Heart left ventricle (tissue), 16 donors: ENCODE measurements at regions of chr1 and their contacts with region 1.

Region 1: GRCh38 chr1:71093938-71094337 is 13.1 kb upstream of the ZRANB2 start:
- DNase-seq: no peak
- ATAC-seq: no peak
- H3K4me3 ChIP-seq: no peak overlapping the region
- H3K27ac ChIP-seq: no peak overlapping the region
- H3K4me1 ChIP-seq: no peaks in the 10 kb centered on the region
- H3K27me3 ChIP-seq: no peaks in the 10 kb centered on the region
- CTCF ChIP-seq: peak in 8 of 12 donors; percentile 16 to 47 (median 38)
- POLR2A ChIP-seq: no peak

Region 2: DNA sequence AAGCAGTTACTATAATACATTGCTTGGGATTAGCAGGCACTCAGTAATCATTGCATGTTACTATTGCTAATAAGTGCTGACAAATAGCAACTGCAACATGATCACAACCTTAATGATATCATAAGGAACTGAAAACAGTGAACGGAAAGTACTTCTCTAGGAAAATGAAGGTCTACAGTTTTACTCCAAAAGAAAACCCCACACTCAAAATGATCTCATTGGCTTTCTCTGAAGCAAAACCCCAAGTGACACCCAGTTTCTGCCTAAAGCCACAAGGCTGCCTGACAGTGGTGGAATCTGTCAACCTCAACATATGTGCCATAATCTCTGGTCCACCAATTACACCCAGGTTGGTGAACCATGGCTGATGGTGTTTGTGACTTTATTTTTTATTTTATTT is 183.9 kb before region 1 on chr1:
- intact Hi-C with region 1: no loop called
- DNase-seq: no peak
- ATAC-seq: no peak
- H3K4me3 ChIP-seq: no peak overlapping the region
- H3K27ac ChIP-seq: no peak overlapping the region
- H3K4me1 ChIP-seq: peaks cover 0 to 3% (median 0%) of the 10 kb centered on the region in 12 donors
- H3K27me3 ChIP-seq: no peaks in the 10 kb centered on the region
- CTCF ChIP-seq: no peak
- POLR2A ChIP-seq: no peak

Region 3: GRCh38 chr1:71521655-71522264 is 427.8 kb after region 1 on chr1:
- intact Hi-C with region 1: loop called in 3 of 10 experiments (anchors 10 kb)
- DNase-seq: peak in 3 of 5 donors; percentile 11 to 40 (median 20)
- ATAC-seq: peak in 2 of 4 donors; percentile 52 to 67
- H3K4me3 ChIP-seq: no peak overlapping the region
- H3K27ac ChIP-seq: no peak overlapping the region
- H3K4me1 ChIP-seq: no peaks in the 10 kb centered on the region
- H3K27me3 ChIP-seq: no peaks in the 10 kb centered on the region
- CTCF ChIP-seq: peak in 11 of 12 donors; percentile 22 to 72 (median 57)
- POLR2A ChIP-seq: no peak

Region 4: GRCh38 chr1:72023063-72023930 is 929.4 kb after region 1 on chr1:
- intact Hi-C with region 1: loop called in 1 of 10 experiments (anchors 10 kb)
- DNase-seq: no peak
- ATAC-seq: no peak
- H3K4me3 ChIP-seq: no peak overlapping the region
- H3K27ac ChIP-seq: no peak overlapping the region
- H3K4me1 ChIP-seq: no peaks in the 10 kb centered on the region
- H3K27me3 ChIP-seq: no peaks in the 10 kb centered on the region
- CTCF ChIP-seq: no peak
- POLR2A ChIP-seq: no peak

Region 5: DNA sequence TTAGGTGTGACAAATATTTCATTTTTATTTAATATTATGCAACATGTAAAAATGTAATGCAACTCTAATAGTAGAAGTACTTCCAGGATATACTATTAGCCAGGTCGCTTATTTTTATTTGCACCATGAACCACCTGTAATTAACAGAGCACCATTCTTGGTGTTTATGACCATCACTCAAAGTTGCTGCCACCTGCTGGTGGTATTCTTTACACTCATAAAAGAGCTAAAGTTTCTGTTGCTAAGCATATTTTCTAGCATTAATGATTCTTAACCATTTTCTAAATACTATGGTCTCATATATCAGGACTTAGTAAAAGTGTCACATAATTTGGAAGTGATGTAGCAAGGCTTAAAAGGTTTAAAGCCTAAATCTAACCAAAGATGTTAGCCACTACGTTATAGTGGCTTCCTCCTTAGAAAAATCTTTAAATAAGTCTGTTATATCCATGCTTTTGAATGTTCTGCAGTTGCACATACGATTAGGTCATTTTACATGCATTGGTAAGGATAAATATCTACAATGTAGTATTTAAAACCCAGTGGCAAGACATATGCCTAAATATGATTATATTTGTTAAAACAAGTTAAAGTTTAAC is 943.9 kb after region 1 on chr1:
- intact Hi-C with region 1: loop called in 1 of 10 experiments (anchors 10 kb)
- DNase-seq: peak in 2 of 5 donors; percentile 10 to 20
- ATAC-seq: no peak
- H3K4me3 ChIP-seq: no peak overlapping the region
- H3K27ac ChIP-seq: no peak overlapping the region
- H3K4me1 ChIP-seq: no peaks in the 10 kb centered on the region
- H3K27me3 ChIP-seq: no peaks in the 10 kb centered on the region
- CTCF ChIP-seq: peak in 11 of 12 donors; percentile 35 to 64 (median 53)
- POLR2A ChIP-seq: no peak